ENCODE measurements at regions of chr19 and their contacts with region 1.

Region 1: DNA sequence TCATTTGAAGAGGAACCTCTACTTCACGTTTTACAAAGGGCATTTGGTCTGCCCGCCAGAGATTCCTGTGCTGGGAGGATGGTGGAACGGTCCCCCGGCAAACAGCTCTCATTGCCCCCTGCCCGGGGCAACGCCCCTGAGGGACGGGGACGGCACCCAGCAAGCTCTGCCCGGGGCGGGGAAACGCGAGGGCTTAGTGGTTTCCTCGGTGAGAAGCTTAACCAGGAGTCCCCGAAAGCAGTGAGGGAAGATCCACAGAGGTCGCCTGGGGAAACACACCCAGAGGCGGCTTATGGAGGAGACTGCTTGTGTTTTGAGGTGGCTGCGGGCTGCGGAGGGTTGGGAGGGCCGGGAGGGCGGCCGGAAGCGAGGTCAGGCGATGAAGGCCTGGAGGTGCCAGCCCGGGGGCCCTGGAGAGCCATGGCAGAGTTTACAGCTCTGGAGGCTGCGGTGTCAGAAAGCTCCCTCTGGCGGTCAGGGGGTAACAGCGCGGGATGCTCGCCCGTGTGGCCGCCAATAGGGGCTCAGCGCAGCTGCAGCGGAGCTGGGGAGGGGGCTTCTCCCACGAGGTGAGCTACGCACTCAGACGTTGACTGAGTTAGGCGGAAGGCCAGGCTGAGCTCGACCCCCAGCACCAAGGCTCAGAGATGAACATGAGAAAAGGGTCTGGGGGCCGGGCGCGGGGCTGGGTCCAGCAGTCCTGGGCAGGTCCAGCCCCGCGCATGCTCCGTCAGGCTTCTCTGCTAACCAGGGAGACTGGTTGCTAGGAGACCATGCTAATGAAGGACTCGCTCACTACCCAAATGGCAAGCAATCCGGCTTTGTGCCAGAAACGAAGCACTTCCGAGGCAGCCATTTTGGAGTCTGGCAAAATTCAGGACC is 652 bp upstream of the TPGS1 start:
- DNase-seq: peak; percentile 82 to 100 (median 97)

Region 2: DNA sequence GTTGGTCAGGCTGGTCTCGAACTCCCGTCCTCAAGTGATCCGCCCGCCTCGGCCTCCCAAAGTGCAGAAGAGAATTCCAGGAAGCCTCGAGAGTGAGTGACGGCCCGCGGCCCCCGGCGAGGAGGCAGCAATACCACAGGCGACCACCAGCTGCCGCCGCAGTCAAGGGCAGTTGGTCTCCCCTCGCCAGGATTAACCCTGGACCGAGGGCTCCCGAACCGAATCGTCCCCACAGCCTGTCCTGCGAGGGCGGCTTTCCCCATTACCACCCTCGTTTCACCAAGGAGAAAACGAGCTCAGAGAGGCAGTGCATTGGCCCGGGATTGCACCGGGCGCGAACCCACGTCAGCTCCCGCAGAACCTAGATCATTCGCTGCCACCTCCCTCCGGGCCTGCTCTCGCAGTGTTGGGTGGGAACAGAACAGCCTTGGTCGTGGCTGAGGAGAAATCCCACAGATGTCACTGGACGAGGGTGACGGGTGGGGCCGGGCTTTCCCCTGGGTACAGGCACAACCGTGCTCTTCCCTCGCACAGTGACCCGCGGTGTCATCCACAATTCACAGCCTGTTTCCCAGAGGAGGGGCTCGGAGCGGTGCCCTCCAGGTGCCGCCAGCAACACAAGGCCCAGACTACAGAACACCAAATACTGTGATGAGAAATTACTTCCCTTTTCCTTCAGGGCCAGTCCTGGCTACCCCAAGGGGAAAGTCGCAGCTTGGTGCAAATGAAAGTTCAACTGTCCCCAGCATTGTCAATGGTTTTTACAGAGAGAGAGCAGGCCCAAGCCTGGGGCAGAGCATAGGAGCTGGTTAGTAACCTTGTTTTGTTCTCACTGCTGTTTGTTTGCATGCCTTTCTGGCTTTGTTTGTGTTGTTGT is 122.5 kb before region 1 on chr19:
- intact Hi-C with region 1: loop called (anchors 5 kb)
- DNase-seq: peak in 6 of 10 donors; percentile 34 to 90 (median 58)

Region 3: DNA sequence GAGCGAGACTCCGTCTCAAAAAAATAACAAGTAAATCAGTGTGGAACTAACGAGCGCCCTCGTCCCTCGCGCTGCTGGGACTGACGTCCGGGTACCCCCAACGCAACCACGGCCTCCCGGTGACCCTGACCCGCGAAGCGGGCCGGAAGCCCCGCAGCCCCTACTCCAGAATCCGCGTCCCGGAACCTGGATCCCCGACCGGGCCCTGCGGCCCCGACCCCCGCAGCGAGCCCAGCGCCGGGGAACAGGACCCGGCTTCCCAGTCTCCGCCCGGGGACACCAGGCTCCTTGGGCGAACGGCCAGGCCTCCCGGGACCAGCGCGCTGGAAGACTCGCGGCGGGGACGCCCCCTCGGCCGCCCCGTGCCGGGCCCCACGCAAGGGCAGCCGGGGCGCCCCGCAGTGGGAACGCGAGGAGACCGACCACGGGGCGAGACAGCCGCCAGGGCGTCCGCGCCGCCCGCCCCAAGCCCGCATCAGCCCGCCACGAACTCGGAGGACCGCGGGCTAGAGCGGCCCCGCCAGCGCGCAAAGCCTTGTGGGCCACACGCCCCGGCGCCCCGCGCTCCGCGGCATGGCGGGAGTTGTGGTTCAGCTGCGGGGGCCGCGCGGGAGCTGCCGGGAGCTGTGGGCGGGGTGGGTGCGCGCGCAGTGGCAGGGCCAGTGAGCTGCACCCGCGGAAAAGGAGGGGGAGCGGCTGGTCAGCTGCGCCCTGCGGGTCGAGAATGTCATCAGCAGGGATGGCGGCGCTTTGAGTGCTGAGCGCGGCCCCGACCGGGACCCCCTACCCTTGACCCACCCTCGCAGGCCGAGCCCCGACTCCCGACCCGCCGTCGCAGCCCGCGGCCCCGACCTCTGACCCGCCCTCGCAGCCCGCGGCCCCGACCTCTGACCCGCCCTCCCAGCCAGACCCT is 17.9 kb before region 1 on chr19:
- intact Hi-C with region 1: loop called (anchors 1 kb)
- DNase-seq: peak; percentile 93 to 99 (median 94)

Region 4: DNA sequence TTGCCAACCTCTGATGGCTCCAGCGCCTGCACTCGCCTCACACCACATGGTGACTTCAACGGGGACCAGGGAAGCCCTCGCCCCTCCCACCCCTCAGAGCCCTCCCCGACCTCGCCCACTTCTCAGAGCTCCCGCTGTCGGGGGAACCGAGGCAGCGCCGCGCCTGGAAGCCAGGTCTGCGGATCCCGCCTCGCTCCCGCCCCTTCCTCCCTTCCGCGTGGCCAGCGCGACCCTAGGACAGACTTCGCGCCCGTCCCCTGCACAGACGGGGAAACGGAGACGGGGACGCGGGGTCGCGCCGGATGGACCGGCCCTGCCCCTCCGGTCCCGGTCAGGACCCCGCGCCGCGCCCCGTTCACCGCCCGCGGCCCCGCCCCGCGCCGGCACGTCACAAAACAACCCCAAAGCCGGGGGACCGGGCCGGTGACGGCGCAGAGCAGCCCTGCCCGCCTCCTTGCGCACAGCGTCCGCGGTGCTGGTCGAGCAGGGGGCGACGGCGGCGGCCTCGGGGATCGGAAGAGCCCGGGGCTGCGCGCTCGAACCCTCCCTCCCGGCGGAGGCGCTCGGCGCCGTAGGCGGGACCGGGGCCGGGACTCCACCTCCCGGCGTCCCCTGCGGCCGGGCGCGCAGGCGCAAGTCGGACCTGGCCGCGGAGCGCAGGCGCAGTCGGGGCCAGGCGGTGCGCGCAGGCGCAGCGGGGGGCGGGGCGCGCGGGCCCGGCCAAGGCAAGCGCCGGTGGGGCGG is 24.5 kb after region 1 on chr19:
- intact Hi-C with region 1: loop called (anchors 2 kb)
- DNase-seq: peak in 8 of 10 donors; percentile 54 to 96 (median 60)

Region 5: DNA sequence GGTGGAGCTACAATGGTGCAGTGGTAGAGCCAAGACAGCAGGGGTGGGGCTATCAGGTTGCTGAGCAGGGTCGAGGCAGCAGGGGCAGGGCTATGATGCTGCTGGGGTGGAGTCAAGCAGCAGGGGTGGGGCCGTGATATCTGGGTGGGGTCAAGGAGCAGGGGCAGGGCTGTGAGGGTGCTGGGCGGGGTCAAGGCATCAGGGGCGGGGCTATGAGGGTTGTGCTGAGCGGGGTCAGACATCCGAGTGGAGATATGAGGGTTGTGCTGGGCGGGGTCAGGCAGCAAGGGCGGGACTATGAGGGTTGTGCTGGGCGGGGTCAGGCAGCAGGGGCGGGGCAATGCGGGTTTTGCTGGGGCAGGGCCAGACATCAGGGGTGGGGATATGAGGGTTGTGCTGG is 97.7 kb after region 1 on chr19:
- intact Hi-C with region 1: no loop called
- DNase-seq: no peak

Region 6: GRCh38 chr19:662962-663681 is 156.5 kb after region 1 on chr19 and contains the start of gene RNF126:
- intact Hi-C with region 1: no loop called
- DNase-seq: peak; percentile 73 to 97 (median 84)

Measured in posterior cingulate gyrus (tissue), 11 donors.